ENCODE measurements at regions of chr5 and their contacts with region 1.

Region 1: GRCh38 chr5:96934708-96935558 is 947 bp upstream of the LNPEP start:
- DNase-seq: peak; percentile 99
- H3K4me3 ChIP-seq: peak overlapping the region; percentile 55 to 91 (median 82)
- H3K27ac ChIP-seq: peak overlapping the region; percentile 94 to 99 (median 98)
- H3K4me1 ChIP-seq: peaks cover 42 to 79% (median 64%) of the 10 kb centered on the region in 6 donors
- H3K27me3 ChIP-seq: no peaks in the 10 kb centered on the region
- CTCF ChIP-seq: peak in 9 of 11 experiments; percentile 12 to 59 (median 38)
- POLR2A ChIP-seq: peak; percentile 36 to 76 (median 56)

Region 2: GRCh38 chr5:96807075-96807654 is 127.8 kb before region 1 on chr5:
- intact Hi-C with region 1: loop called (anchors 5 kb)
- DNase-seq: peak; percentile 94
- H3K4me3 ChIP-seq: peak overlapping the region; percentile 51 to 87 (median 69)
- H3K27ac ChIP-seq: peak overlapping the region; percentile 98 to 100 (median 99)
- H3K4me1 ChIP-seq: peaks cover 17 to 60% (median 50%) of the 10 kb centered on the region in 6 donors
- H3K27me3 ChIP-seq: no peaks in the 10 kb centered on the region
- CTCF ChIP-seq: no peak
- POLR2A ChIP-seq: peak in 1 of 3 donors; percentile 49

Region 3: DNA sequence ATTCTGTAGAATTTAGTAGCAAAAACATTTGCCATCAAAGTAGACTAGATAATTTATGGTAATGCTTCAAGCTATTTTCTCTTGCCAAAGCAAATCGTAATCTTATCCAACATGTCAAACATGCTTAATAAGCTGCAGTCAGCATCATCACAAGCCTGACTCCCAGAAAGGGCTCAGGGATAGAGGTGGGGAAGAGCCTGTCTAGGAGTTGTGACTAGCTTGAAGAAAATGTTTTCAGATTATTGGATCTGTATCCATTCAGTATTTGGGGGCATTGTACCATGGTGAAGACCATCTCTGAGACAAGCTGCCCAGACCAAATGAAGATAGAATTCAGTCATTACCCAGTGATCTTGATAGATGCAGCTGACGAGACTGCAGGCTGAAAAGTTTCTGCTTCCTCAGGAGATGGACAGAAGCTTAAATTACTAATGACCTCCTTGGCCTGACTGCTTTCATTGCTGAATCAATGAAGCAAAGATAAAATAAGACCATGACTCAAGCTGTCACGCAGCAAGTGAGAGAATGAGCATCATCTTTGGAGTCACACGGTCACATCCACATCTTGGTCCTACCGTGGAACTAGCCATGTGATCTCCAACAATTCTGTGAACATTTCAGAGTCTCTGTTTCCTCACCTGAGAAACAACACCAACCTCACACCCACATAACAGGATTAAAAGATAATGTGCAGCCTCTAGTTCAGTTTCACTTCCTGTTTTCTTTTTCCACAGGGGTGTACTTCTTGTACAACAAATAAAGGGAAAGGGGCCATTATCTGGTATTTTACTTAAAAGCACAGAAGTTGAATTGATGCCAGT is 49.2 kb before region 1 on chr5:
- intact Hi-C with region 1: loop called (anchors 10 kb)
- DNase-seq: no peak
- H3K4me3 ChIP-seq: peak overlapping the region in 1 of 8 donors; percentile 27
- H3K27ac ChIP-seq: peak overlapping the region; percentile 35 to 89 (median 68)
- H3K4me1 ChIP-seq: peaks cover 33 to 68% (median 55%) of the 10 kb centered on the region in 6 donors
- H3K27me3 ChIP-seq: no peaks in the 10 kb centered on the region
- CTCF ChIP-seq: no peak
- POLR2A ChIP-seq: no peak

Region 4: DNA sequence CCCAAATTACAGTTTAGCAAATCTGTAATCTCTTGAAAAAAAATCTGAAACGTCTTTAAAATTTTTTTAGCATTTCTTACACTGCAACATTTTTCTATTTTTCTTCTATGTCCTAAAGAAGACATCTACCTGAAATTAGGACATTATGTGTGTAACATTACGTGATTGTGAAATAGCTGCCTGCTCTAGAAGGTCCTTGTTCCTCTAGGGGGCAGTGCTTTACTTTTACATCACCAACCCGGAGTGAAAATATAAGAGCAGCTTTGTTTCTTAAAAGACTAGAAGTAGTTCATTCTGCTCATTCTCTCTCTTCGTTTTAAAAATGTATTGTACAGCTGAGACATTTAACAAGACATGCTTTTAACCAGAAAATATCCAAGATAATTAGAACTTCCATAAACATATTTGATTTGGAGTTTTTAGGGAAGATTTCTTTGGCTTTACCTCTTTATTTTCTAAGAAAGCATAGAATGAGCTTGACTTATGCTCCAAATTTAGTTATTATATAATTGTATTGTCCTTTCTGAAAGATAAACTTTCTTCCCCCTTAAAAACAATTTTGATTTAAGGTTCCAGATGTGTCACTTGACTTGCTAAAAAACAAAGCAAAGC is 296.2 kb after region 1 on chr5:
- intact Hi-C with region 1: no loop called
- DNase-seq: no peak
- H3K4me3 ChIP-seq: no peak overlapping the region
- H3K27ac ChIP-seq: no peak overlapping the region
- H3K4me1 ChIP-seq: peaks cover 0 to 7% (median 0%) of the 10 kb centered on the region in 6 donors
- H3K27me3 ChIP-seq: no peaks in the 10 kb centered on the region
- CTCF ChIP-seq: peak in 10 of 11 experiments; percentile 27 to 79 (median 68)
- POLR2A ChIP-seq: no peak